ENCODE measurements at regions of chr14 and their contacts with region 1.

Region 1: GRCh38 chr14:94080471-94081289 is at the start of gene DDX24:
- DNase-seq: peak; percentile 98
- H3K4me3 Mint-ChIP-seq: peak within 1 kb of the TSS; percentile 98
- H3K27ac Mint-ChIP-seq: peak within 1 kb of the TSS; percentile 98
- H3K4me1 Mint-ChIP-seq: peaks cover 61% of the 10 kb centered on the region
- H3K27me3 Mint-ChIP-seq: no peaks in the 10 kb centered on the region
- total RNA-seq, gene DDX24: 210 to 216 TPM

Region 2: DNA sequence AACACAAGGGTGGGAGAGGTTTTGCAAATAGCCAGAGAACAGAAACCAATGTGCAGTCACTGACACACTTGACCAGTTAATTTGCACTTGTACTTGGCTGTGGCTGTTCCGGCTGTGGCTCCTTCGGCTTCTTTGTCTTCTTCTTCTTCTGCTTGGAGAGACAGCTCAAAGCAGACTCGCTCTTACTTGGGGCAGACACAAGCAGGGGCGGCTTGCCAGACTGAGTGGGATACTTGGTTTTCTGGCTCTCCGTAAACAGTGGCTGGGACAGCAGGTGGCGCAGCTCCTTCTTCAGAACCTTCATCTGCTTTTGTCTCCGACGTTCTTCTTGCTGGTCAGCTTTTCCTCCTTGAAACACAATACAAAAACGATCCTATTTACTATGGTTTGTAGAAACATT is 29.6 kb before region 1 on chr14:
- CTCF ChIA-PET with region 1: interaction called, 6 read pairs
- POLR2A ChIA-PET with region 1: interaction called, 54 read pairs
- DNase-seq: peak; percentile 16
- H3K4me3 Mint-ChIP-seq: no peak overlapping the region
- H3K27ac Mint-ChIP-seq: peak overlapping the region; percentile 5
- H3K4me1 Mint-ChIP-seq: peaks cover 39% of the 10 kb centered on the region
- H3K27me3 Mint-ChIP-seq: no peaks in the 10 kb centered on the region

Region 3: GRCh38 chr14:94056579-94057308 is 23.9 kb before region 1 on chr14:
- CTCF ChIA-PET with region 1: interaction called, 6 read pairs
- POLR2A ChIA-PET with region 1: interaction called, 54 read pairs
- DNase-seq: peak; percentile 56
- H3K4me3 Mint-ChIP-seq: peak overlapping the region; percentile 7
- H3K27ac Mint-ChIP-seq: peak overlapping the region; percentile 83
- H3K4me1 Mint-ChIP-seq: peaks cover 65% of the 10 kb centered on the region
- H3K27me3 Mint-ChIP-seq: no peaks in the 10 kb centered on the region

Region 4: DNA sequence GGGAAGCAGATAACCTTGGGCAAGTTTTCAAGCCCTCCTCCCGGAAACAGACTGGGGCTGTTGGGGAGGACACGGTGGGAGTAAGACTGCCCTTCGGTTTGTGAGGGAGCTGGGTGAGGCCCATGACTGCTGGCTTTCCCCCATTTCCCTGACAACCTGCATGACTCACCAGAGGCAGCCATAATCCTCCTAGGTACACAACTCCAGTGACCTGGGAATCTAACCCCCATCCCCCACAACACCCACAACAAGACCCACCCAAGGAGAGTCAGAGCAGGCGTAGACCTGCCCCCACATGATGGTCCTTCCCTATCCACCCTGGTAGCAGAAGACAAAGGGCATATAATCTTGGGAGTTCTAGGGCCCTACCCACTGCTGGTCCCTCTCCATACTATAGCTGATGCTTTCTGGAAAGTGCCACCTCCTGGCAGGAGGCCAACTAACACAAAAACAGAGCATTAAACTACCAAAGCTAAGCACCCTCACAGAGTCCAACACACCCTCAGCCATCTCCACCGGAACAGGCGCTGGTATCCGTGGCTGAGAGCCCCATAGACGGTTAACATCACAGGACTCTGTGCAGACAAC is 14.5 kb before region 1 on chr14:
- CTCF ChIA-PET with region 1: no interaction called
- POLR2A ChIA-PET with region 1: interaction called, 11 read pairs
- DNase-seq: no peak
- H3K4me3 Mint-ChIP-seq: no peak overlapping the region
- H3K27ac Mint-ChIP-seq: no peak overlapping the region
- H3K4me1 Mint-ChIP-seq: peaks cover 44% of the 10 kb centered on the region
- H3K27me3 Mint-ChIP-seq: no peaks in the 10 kb centered on the region

Region 5: DNA sequence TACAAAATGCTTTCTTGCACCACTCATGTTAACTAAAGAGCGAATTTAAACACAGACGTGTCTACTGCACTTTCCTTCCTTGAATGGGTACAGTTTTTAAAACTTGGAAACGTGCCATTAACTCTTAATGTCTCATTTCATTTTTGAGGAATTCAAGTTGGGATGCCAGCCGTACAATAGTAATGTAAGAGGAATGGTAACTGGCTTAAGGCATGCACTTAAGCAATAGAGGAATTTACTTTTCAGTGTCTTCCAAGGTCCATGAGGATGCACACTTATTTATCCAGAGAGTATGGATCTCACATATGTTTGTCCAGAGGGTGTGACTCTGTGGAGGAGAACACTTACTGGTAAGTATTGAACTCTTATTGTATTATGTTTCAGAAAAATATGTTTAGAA is 146.3 kb after region 1 on chr14:
- CTCF ChIA-PET with region 1: no interaction called
- POLR2A ChIA-PET with region 1: no interaction called
- DNase-seq: no peak
- H3K4me3 Mint-ChIP-seq: no peak overlapping the region
- H3K27ac Mint-ChIP-seq: no peak overlapping the region
- H3K4me1 Mint-ChIP-seq: no peaks in the 10 kb centered on the region
- H3K27me3 Mint-ChIP-seq: no peaks in the 10 kb centered on the region